Spleen (tissue), 13 donors: ENCODE measurements at regions of chr6 and their contacts with region 1.

Region 1: GRCh38 chr6:151323791-151324487 is 67.4 kb downstream of the ZBTB2 start:
- DNase-seq: peak; percentile 92
- H3K4me3 ChIP-seq: peak overlapping the region in 1 of 8 donors; percentile 27
- H3K27ac ChIP-seq: peak overlapping the region in 7 of 8 donors; percentile 16 to 62 (median 41)
- H3K4me1 ChIP-seq: peaks cover 10 to 36% (median 28%) of the 10 kb centered on the region in 6 donors
- H3K27me3 ChIP-seq: peaks cover 0 to 31% (median 0%) of the 10 kb centered on the region in 7 donors
- CTCF ChIP-seq: peak; percentile 94 to 98 (median 97)
- POLR2A ChIP-seq: no peak

Region 2: GRCh38 chr6:151014404-151015100 is 309.4 kb before region 1 on chr6:
- intact Hi-C with region 1: loop called (anchors 2 kb)
- DNase-seq: peak; percentile 86
- H3K4me3 ChIP-seq: peak overlapping the region in 1 of 8 donors; percentile 2
- H3K27ac ChIP-seq: peak overlapping the region in 5 of 8 donors; percentile 3 to 65 (median 50)
- H3K4me1 ChIP-seq: peaks cover 0 to 12% (median 8%) of the 10 kb centered on the region in 6 donors
- H3K27me3 ChIP-seq: no peaks in the 10 kb centered on the region
- CTCF ChIP-seq: peak; percentile 81 to 98 (median 89)
- POLR2A ChIP-seq: no peak

Region 3: DNA sequence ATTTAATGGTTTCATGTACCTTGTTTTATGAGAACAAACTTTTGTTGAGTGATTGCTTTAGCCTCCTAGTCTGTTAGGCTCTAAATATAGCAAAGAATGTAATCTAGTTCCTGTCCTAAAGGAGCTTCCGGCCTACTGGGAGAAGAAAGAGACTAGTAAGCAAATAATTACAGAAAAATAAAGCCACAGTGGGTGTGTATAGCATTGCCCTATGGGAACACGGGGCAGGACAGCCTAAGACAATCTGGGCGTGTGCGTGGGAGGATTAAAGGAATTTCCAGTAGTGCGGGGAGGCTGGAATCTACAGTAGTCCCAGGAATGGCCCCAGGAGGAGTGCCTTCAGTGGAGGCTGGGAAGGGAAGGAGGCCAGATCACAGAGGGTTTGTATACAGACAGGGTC is 182.3 kb before region 1 on chr6:
- intact Hi-C with region 1: no loop called
- DNase-seq: no peak
- H3K4me3 ChIP-seq: no peak overlapping the region
- H3K27ac ChIP-seq: peak overlapping the region in 7 of 8 donors; percentile 43 to 72 (median 50)
- H3K4me1 ChIP-seq: peaks cover 0 to 17% (median 9%) of the 10 kb centered on the region in 6 donors
- H3K27me3 ChIP-seq: no peaks in the 10 kb centered on the region
- CTCF ChIP-seq: no peak
- POLR2A ChIP-seq: no peak